Activated CD8-positive, alpha-beta T cell treated with anti-CD3 and anti-CD28 coated beads, Interleukin-2, amount 10 ng/mL, durations not matched to agents 7 days and 5 days (primary cell): ENCODE measurements at regions of chr22 and their contacts with region 1.

Region 1: GRCh38 chr22:37643225-37643847 is 3.9 kb downstream of the SH3BP1 start:
- DNase-seq: peak; percentile 91
- ATAC-seq: peak; percentile 61
- H3K4me3 Mint-ChIP-seq: peak overlapping the region; percentile 63
- H3K27ac Mint-ChIP-seq: peak overlapping the region; percentile 72
- H3K4me1 Mint-ChIP-seq: peaks cover 47% of the 10 kb centered on the region
- H3K27me3 Mint-ChIP-seq: no peaks in the 10 kb centered on the region

Region 2: DNA sequence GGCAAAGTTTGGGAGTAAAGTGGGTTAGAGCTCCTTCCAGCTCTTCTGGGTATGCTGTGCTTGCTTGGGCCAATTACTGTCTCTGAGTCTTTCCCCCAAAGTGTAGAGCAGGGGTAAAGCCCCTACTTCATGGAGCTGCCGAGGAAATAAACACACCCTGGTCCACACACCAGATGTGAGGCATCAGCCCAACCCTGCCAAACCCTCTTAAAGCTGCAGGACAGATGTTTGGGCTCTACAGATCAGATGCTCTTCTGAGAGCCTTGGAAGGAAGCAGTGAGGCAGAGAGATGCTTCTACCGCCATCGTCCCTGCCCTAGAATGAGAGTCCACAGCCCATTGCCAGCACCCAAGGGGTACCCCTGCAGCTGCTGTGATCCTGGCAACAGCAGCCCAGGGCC is 280.7 kb before region 1 on chr22:
- CTCF ChIA-PET with region 1: no interaction called
- POLR2A ChIA-PET with region 1: no interaction called
- DNase-seq: no peak
- ATAC-seq: no peak
- H3K4me3 Mint-ChIP-seq: no peak overlapping the region
- H3K27ac Mint-ChIP-seq: no peak overlapping the region
- H3K4me1 Mint-ChIP-seq: peaks cover 4% of the 10 kb centered on the region
- H3K27me3 Mint-ChIP-seq: peaks cover 2% of the 10 kb centered on the region

Region 3: GRCh38 chr22:37623075-37624016 is 20.0 kb before region 1 on chr22:
- CTCF ChIA-PET with region 1: interaction called, 261 read pairs
- POLR2A ChIA-PET with region 1: interaction called, 14 read pairs
- DNase-seq: peak; percentile 85
- ATAC-seq: peak; percentile 66
- H3K4me3 Mint-ChIP-seq: no peak overlapping the region
- H3K27ac Mint-ChIP-seq: peak overlapping the region; percentile 89
- H3K4me1 Mint-ChIP-seq: peaks cover 52% of the 10 kb centered on the region
- H3K27me3 Mint-ChIP-seq: no peaks in the 10 kb centered on the region

Region 4: GRCh38 chr22:37658133-37659065 is 15.1 kb after region 1 on chr22 and contains the start of gene PDXP:
- CTCF ChIA-PET with region 1: interaction called, 201 read pairs
- POLR2A ChIA-PET with region 1: interaction called, 21 read pairs
- DNase-seq: peak; percentile 99
- ATAC-seq: peak; percentile 98
- H3K4me3 Mint-ChIP-seq: peak within 1 kb of the TSS; percentile 87
- H3K27ac Mint-ChIP-seq: peak within 1 kb of the TSS; percentile 87
- H3K4me1 Mint-ChIP-seq: peaks cover 37% of the 10 kb centered on the region
- H3K27me3 Mint-ChIP-seq: no peaks in the 10 kb centered on the region
- total RNA-seq, gene PDXP: 31.5 to 33.5 TPM

Region 5: DNA sequence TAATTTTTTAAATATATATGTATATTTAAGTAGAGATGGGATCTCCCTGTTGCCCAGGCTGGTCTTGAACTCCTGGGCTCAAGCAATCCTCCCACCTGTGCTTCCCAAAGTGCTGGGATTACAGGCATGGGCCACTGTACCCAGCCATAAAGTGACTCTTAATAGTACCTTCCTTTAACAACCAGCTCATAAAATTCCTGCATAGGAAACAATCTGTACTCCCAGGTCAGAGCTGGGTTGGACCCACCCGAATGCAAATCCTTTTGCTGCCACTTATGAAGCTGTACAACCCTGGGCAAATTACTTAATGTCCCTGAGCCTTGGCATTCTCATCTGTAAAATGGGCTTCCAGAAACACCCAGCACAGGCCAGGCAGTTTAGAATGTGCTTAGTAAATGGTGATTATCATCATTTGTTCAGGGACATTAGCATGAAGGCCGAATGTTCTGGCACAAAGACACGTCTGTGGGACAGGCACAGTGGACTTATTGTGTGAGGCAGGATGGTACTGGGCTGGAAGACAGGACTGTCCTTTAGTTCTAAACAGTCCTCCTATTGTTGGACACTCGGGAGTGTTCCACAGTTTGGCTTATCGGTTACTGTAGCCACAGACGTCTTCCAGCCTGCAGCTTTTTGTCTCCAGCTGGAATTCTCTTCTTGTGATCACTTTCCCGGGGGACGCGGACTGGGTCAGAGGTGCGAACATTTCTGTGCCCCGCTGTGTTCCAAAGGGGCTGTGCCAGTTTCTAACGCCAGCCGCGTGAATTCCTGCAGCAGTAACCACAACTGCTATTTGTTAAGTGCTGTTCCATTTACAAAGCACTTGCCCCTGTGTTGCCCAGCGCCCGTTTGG is 21.1 kb after region 1 on chr22:
- CTCF ChIA-PET with region 1: interaction called, 201 read pairs
- POLR2A ChIA-PET with region 1: interaction called, 11 read pairs
- DNase-seq: no peak
- ATAC-seq: no peak
- H3K4me3 Mint-ChIP-seq: no peak overlapping the region
- H3K27ac Mint-ChIP-seq: no peak overlapping the region
- H3K4me1 Mint-ChIP-seq: peaks cover 35% of the 10 kb centered on the region
- H3K27me3 Mint-ChIP-seq: no peaks in the 10 kb centered on the region

Region 6: GRCh38 chr22:37686002-37686982 is 43.0 kb after region 1 on chr22 and contains the start of gene NOL12:
- CTCF ChIA-PET with region 1: interaction called, 183 read pairs
- POLR2A ChIA-PET with region 1: interaction called, 6 read pairs
- DNase-seq: peak; percentile 83
- ATAC-seq: peak; percentile 93
- H3K4me3 Mint-ChIP-seq: peak within 1 kb of the TSS; percentile 98
- H3K27ac Mint-ChIP-seq: peak within 1 kb of the TSS; percentile 92
- H3K4me1 Mint-ChIP-seq: peaks cover 30% of the 10 kb centered on the region
- H3K27me3 Mint-ChIP-seq: no peaks in the 10 kb centered on the region
- total RNA-seq, gene NOL12: 42.6 to 45.3 TPM

Region 7: GRCh38 chr22:37940698-37941376 is 297.5 kb after region 1 on chr22:
- CTCF ChIA-PET with region 1: no interaction called
- POLR2A ChIA-PET with region 1: no interaction called
- DNase-seq: no peak
- ATAC-seq: no peak
- H3K4me3 Mint-ChIP-seq: no peak overlapping the region
- H3K27ac Mint-ChIP-seq: peak overlapping the region; percentile 28
- H3K4me1 Mint-ChIP-seq: peaks cover 4% of the 10 kb centered on the region
- H3K27me3 Mint-ChIP-seq: no peaks in the 10 kb centered on the region